Endothelial cell of umbilical vein (primary cell): ENCODE measurements at regions of chr1 and their contacts with region 1.

Region 1: DNA sequence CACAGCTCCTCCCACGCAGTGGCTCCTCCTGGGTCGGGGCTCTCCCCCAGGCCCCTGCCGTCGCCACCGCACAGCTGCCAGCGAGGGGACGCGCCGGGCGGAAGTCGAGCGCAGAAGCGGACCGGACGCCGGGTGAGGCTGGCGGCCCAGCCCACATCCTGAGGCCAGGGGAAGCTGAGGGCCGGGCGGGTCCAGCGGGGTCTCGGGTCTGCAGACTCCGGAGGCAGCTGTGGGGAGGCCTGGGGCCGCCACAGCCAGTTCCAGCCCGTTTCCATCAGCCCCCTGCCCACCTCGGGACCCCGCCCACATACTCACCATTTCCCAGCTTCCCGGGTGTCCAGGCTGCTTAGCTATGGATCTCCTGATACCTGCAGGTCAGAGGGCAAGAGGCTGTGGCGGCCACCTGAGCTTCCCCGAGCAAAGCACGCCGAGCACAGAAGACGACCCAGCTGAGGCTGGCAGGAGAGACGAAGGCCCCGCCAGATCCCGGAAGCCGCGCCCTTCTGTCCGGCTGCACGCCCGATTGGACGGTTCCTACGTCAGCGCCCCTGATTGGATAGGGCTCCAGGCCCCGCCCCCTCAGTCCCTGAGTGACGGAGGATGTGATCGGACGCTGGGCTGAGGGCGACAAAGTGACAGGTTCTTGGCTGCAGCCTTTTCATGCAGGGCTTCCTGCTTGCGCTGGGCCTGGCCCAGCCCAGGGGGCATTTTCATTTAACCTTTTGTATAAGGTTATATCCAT is 38.7 kb upstream of the ZNF124 start:
- DNase-seq: peak; percentile 92
- H3K4me3 ChIP-seq: peak overlapping the region; percentile 72 to 90 (median 81)
- H3K27ac ChIP-seq: peak overlapping the region; percentile 92
- H3K4me1 ChIP-seq: peaks cover 10% of the 10 kb centered on the region
- H3K27me3 ChIP-seq: peaks cover 0 to 18% of the 10 kb centered on the region in 2 experiments
- CTCF ChIP-seq: no peak
- POLR2A ChIP-seq: peak; percentile 84

Region 2: GRCh38 chr1:247007511-247008405 is 202.8 kb before region 1 on chr1 and contains the start of gene ZNF695:
- CTCF ChIA-PET with region 1: no interaction called
- POLR2A ChIA-PET with region 1: no interaction called
- dilution Hi-C with region 1: no loop called
- intact Hi-C with region 1: loop called (anchors 5 kb)
- DNase-seq: peak; percentile 96
- H3K4me3 ChIP-seq: peak within 1 kb of the TSS; percentile 57 to 79 (median 73)
- H3K27ac ChIP-seq: peak within 1 kb of the TSS; percentile 25
- H3K4me1 ChIP-seq: no peaks in the 10 kb centered on the region
- H3K27me3 ChIP-seq: no peaks in the 10 kb centered on the region
- CTCF ChIP-seq: no peak
- POLR2A ChIP-seq: peak; percentile 25
- total RNA-seq, gene ZNF695: 4.8 and 5.5 TPM in 2 replicates